Activated T-helper 2 cell treated with anti-CD3 and anti-CD28 coated beads, Interferon-gamma antibody, Interleukin-2, Interleukin-4, amounts not matched to agents 10 μg/mL and 5 μg/mL and 100 μg/mL, durations not matched to agents 14 hours and 24 hours and 36 hours (primary cell): ENCODE measurements at regions of chr4 and their contacts with region 1.

Region 1: GRCh38 chr4:84482564-84483563 is 16.2 kb downstream of the NKX6-1 start:
- DNase-seq: no peak
- H3K4me3 Mint-ChIP-seq: no peak overlapping the region
- H3K27ac Mint-ChIP-seq: no peak overlapping the region
- H3K4me1 Mint-ChIP-seq: peaks cover 8% of the 10 kb centered on the region
- H3K27me3 Mint-ChIP-seq: peaks cover 75% of the 10 kb centered on the region

Region 2: DNA sequence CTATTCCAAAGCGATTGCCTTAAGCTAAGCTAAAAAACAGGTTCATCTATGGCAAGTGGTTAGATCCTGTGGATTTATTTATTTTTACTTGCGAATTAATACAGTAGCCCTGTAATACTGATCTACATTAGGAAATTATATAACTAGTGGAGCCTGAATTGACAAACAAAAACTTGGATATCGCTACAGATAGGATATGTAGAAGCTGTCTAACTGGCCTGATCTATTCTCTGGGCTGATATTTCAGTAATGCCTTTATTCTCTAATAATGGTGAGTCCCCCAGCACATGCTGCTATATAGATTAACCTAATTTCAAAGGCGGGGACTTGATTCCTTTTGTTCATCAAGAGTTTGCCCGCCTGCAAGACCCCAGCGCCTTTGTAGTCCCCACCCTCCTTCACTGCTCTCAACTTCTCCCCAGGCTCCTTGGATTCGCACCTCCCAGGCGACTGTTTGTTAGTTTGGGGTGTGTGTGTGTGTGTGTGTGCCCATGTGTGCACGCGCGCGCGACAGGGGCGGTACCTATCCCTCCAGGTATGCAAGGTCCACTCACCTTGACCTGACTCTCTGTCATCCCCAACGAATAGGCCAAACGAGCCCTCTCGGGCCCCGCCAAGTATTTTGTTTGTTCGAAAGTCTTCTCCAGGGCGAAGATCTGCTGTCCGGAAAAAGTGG is 12.4 kb after region 1 on chr4:
- intact Hi-C with region 1: loop called (anchors 1 kb)
- DNase-seq: no peak
- H3K4me3 Mint-ChIP-seq: no peak overlapping the region
- H3K27ac Mint-ChIP-seq: no peak overlapping the region
- H3K4me1 Mint-ChIP-seq: peaks cover 6% of the 10 kb centered on the region
- H3K27me3 Mint-ChIP-seq: peaks cover 83% of the 10 kb centered on the region

Region 3: GRCh38 chr4:85610450-85610849 is 1127.6 kb after region 1 on chr4:
- intact Hi-C with region 1: no loop called
- DNase-seq: no peak
- H3K4me3 Mint-ChIP-seq: no peak overlapping the region
- H3K27ac Mint-ChIP-seq: peak overlapping the region; percentile 65
- H3K4me1 Mint-ChIP-seq: peaks cover 2% of the 10 kb centered on the region
- H3K27me3 Mint-ChIP-seq: no peaks in the 10 kb centered on the region